ENCODE measurements at regions of chr3 and their contacts with region 1.

Region 1: DNA sequence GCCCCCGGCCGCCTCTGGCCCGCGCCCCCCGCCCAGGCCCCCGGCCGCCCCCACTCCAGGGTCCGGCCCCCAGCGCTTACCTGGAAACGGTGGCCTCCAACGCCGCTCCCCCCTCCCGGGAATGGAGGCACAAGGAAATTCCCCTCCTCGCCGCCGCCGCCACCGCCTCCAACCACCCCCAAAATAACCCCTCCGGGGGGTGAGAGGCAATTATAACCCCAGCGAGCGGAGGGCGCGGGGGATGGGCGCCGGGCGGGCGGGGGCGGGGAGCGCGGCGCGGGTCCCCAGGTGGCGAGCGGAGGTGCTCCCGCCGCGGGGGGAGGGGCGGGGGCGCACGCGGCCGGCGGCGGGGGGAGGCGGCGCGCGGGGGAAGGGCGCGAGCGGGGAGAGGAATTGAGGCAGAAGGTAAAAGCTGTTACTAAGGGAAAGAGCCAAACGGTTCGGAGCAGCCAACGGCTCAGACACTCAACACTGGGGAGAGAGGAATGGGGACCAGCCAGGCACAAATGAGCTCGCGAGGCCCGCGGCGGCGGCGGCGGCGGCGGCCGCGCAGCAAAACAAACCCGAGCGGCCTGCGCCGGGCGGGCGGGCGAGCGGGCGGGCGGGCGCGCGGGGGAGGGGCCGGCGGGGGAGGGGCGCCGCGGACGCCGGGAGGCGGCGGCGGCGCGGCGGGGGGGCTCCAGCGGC is at the start of gene TBL1XR1:
- DNase-seq: peak; percentile 96
- H3K4me3 ChIP-seq: peak within 1 kb of the TSS; percentile 79
- H3K27ac ChIP-seq: peak within 1 kb of the TSS; percentile 98
- H3K4me1 ChIP-seq: peaks cover 29% of the 10 kb centered on the region
- H3K27me3 ChIP-seq: no peaks in the 10 kb centered on the region
- CTCF ChIP-seq: no peak
- total RNA-seq, gene TBL1XR1: 186 and 220 TPM in 2 replicates

Region 2: DNA sequence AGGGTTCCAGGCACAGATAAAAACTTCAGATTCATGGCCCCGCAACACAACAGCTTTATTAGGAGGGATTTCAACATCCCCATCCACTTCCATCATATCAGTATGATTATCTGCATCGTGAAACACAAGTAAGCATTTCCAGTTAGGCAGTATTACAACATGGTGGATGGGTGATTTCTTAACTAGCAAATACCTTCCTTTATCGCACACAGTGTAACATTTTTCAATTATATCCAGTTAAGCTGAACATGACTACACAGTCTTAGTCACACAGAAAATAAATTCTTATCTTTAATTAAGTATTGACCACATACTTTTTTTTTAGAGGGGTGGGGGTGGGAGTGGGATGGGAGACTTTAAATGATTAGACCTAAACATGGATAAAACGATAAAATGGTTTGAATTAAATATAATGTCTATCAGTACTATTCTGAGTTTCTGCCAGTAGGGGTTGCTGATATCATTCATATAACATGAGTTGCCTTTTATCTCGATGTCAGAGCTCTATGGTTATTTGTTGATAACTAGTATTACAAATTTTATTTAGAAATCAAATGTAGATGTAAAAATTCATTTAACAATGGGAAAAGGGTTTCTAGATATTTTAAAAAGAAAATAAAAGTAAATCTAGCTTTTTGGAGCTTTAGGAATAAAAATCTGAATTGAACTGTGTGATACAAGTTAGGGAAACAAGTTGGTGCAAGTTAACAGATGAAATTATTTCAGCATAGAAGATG is 146.5 kb before region 1 on chr3:
- CTCF ChIA-PET with region 1: interaction called, 3 read pairs
- POLR2A ChIA-PET with region 1: no interaction called
- intact Hi-C with region 1: loop called (anchors 5 kb)
- DNase-seq: peak; percentile 77
- H3K4me3 ChIP-seq: no peak overlapping the region
- H3K27ac ChIP-seq: peak overlapping the region; percentile 79
- H3K4me1 ChIP-seq: peaks cover 77% of the 10 kb centered on the region
- H3K27me3 ChIP-seq: no peaks in the 10 kb centered on the region
- CTCF ChIP-seq: peak; percentile 72

Region 3: DNA sequence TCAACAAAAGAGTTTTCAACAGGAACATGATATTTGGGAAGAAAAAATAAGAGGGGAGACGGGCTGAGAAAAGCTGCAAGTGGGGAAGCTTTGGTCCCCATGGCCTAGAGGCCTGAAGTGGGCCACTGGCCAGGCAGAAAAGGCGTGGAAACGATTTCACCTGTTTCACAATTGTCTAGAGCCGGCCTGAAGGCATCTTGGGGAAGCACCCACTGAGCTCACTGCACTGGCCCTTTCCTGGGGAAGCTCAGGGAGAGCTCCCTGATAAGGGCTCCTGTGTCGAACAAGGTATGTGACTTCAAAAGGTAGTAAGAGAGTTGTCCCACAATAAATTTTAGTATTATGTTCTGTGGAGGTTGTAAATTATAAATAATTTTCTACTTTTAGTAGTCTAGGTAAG is 18.1 kb after region 1 on chr3:
- CTCF ChIA-PET with region 1: no interaction called
- POLR2A ChIA-PET with region 1: interaction called, 12 read pairs
- intact Hi-C with region 1: no loop called
- DNase-seq: no peak
- H3K4me3 ChIP-seq: no peak overlapping the region
- H3K27ac ChIP-seq: no peak overlapping the region
- H3K4me1 ChIP-seq: peaks cover 25% of the 10 kb centered on the region
- H3K27me3 ChIP-seq: no peaks in the 10 kb centered on the region
- CTCF ChIP-seq: no peak

Region 4: GRCh38 chr3:177251755-177252154 is 54.6 kb after region 1 on chr3:
- CTCF ChIA-PET with region 1: no interaction called
- POLR2A ChIA-PET with region 1: no interaction called
- intact Hi-C with region 1: no loop called
- DNase-seq: no peak
- H3K4me3 ChIP-seq: no peak overlapping the region
- H3K27ac ChIP-seq: no peak overlapping the region
- H3K4me1 ChIP-seq: peaks cover 25% of the 10 kb centered on the region
- H3K27me3 ChIP-seq: no peaks in the 10 kb centered on the region
- CTCF ChIP-seq: no peak

Region 5: GRCh38 chr3:177448987-177449975 is 252.1 kb after region 1 on chr3:
- CTCF ChIA-PET with region 1: no interaction called
- POLR2A ChIA-PET with region 1: no interaction called
- intact Hi-C with region 1: loop called (anchors 5 kb)
- DNase-seq: peak; percentile 64
- H3K4me3 ChIP-seq: no peak overlapping the region
- H3K27ac ChIP-seq: peak overlapping the region; percentile 71
- H3K4me1 ChIP-seq: peaks cover 64% of the 10 kb centered on the region
- H3K27me3 ChIP-seq: no peaks in the 10 kb centered on the region
- CTCF ChIP-seq: no peak

Region 6: DNA sequence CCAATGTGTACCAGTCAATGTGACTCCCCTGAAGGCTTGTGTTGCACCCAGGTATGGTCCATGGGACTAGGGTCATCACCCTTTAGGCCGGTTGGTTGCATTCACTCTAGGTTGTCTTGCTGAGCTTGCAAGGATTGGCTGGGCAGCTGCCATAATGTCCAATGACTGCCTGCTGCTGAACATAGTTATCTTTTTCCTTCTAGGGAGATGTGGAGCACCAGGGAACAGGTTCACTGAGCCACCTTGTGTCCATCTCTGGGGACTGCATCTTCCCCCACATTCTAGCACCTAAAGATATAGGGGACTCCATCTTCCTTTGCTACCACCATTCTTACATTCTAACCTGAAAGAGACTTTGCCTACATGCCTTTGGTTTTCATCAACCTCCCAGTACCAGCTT is 580.5 kb after region 1 on chr3:
- CTCF ChIA-PET with region 1: no interaction called
- POLR2A ChIA-PET with region 1: no interaction called
- intact Hi-C with region 1: loop called (anchors 10 kb)
- DNase-seq: peak; percentile 84
- H3K4me3 ChIP-seq: no peak overlapping the region
- H3K27ac ChIP-seq: no peak overlapping the region
- H3K4me1 ChIP-seq: peaks cover 27% of the 10 kb centered on the region
- H3K27me3 ChIP-seq: no peaks in the 10 kb centered on the region
- CTCF ChIP-seq: peak; percentile 81

Region 7: DNA sequence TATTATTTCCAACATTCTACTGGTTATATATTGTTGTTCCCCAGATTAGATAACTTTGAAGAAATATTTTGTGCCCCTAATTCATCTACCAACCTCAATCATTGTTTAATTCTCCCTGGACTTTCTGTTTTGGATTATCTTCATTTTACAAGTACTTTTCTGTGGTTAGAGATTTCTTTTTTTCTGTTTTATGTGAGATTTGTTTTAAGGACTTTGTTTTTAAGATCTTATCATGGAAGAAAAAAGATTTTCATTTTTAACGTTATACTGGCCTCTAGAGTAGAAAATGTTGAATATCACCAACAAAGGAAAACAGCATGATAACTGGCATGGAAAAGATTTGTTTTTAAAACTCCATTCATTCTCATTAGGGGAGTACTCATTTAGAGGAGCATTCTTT is 1128.1 kb after region 1 on chr3:
- CTCF ChIA-PET with region 1: no interaction called
- POLR2A ChIA-PET with region 1: no interaction called
- intact Hi-C with region 1: loop called (anchors 10 kb)
- DNase-seq: peak; percentile 69
- H3K4me3 ChIP-seq: no peak overlapping the region
- H3K27ac ChIP-seq: no peak overlapping the region
- H3K4me1 ChIP-seq: peaks cover 26% of the 10 kb centered on the region
- H3K27me3 ChIP-seq: no peaks in the 10 kb centered on the region
- CTCF ChIP-seq: peak; percentile 65

Measured in A673 (cell line).